ENCODE measurements at regions of chr17 and their contacts with region 1.

Region 1: GRCh38 chr17:81636505-81637288 is at the starts of genes NPLOC4 and TSPAN10:
- DNase-seq: peak; percentile 96
- total RNA-seq, gene NPLOC4: 77.7 to 87.3 TPM
- total RNA-seq, gene TSPAN10: 0.14 to 0.51 TPM

Region 2: DNA sequence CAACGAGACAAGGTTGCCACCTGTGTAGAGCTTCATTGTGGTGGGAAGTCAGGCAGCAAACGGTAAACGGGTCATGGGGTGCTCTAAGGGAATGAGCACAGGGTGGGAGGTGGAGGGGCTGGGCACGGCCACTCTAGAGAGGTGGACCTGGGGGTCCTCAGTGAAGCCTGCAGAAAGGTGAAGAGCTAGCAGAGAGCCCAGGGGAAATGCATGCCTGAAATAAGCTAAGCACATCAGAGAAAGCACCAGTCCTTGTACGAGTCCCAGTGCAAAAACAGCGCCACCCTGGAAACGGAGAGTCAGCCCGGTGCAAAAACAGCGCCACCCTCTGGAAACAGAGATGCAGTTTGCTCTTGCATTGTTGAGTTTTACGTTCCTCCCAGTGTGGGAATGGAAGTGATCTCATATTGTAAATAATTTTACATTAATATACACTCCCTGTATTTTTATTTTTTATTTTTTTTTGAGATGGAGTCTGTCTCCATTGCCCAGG is 1666.1 kb before region 1 on chr17:
- intact Hi-C with region 1: loop called in 1 of 2 experiments (anchors 5 kb)
- DNase-seq: peak; percentile 46

Region 3: DNA sequence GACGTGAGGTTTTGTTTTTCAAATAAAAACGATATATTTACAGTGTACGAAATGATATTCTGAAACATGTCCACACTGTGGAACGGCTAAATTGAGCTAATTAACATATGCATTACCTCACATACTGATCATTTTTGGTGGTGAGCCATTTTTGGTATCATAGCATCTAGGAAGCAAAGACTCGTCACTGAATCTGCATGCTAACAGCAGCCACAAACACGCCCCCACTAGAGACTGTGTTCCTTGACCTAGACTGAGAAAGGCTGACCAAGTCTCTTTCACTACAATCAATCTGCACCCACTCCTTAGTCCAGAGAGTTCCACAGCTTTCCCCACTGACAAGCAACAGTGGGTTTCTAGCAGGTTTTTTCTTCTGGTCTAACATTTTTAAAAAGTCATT is 29.3 kb before region 1 on chr17:
- intact Hi-C with region 1: loop called in 1 of 2 experiments (anchors 1 kb)
- DNase-seq: no peak